Left lung (tissue), 14 donors: ENCODE measurements at regions of chr7 and their contacts with region 1.

Region 1: GRCh38 chr7:1200045-1200444 is 32.6 kb upstream of the UNCX start:
- DNase-seq: peak in 2 of 4 donors; percentile 66 to 67
- ATAC-seq: no peak
- H3K4me3 ChIP-seq: no peak overlapping the region
- H3K27ac ChIP-seq: no peak overlapping the region
- H3K4me1 ChIP-seq: no peaks in the 10 kb centered on the region
- H3K27me3 ChIP-seq: peaks cover 0 to 79% of the 10 kb centered on the region in 2 donors
- CTCF ChIP-seq: no peak

Region 2: GRCh38 chr7:1268738-1269313 is 68.8 kb after region 1 on chr7:
- intact Hi-C with region 1: loop called in 1 of 2 experiments (anchors 10 kb)
- DNase-seq: no peak
- ATAC-seq: no peak
- H3K4me3 ChIP-seq: no peak overlapping the region
- H3K27ac ChIP-seq: no peak overlapping the region
- H3K4me1 ChIP-seq: no peaks in the 10 kb centered on the region
- H3K27me3 ChIP-seq: peaks cover 0 to 74% of the 10 kb centered on the region in 2 donors
- CTCF ChIP-seq: no peak